Posterior vena cava (tissue), 2 donors: ENCODE measurements at regions of chr18 and their contacts with region 1.

Region 1: GRCh38 chr18:39019989-39020388 is 1454.4 kb upstream of the CELF4 start:
- DNase-seq: no peak

Region 2: DNA sequence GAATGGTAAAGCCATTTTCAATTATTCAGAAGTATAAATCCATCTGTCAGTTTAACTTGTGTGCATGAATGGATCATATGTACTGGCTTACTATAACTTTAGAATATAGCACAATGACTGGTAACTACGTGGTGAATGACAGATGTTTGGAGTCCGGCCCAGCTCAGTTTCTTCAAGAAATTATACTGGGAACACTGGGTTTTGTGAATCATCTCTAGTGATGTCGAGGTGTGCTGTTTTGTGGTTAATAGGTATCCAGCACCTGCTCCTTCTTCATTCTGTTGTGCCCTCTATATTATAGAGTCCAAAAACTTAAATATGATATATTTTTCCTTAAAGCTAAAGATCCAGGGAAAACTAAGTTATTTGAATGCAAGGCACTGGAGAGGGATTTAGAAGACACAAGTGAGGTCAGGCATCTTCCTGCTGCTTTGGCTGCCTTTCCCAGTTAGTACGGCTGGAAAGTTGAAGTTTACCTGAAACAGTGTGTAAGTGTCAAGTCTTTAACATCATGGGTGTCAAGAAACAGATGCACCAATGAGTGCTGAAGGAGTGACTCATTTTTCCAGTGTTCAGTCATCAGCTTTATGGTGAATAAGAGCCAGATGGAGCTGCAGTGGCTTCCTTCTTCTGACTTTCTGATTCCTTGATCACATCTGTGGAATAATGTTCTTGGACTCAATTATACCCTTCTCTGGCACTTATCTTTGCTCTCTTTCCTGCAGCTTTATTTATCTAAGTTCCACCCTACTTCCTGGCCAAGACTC is 374.9 kb before region 1 on chr18:
- intact Hi-C with region 1: no loop called
- DNase-seq: no peak

Region 3: GRCh38 chr18:39480494-39481195 is 460.7 kb after region 1 on chr18:
- intact Hi-C with region 1: loop called in 1 of 2 experiments (anchors 10 kb)
- DNase-seq: no peak